ENCODE measurements at regions of chr7 and their contacts with region 1.

Region 1: DNA sequence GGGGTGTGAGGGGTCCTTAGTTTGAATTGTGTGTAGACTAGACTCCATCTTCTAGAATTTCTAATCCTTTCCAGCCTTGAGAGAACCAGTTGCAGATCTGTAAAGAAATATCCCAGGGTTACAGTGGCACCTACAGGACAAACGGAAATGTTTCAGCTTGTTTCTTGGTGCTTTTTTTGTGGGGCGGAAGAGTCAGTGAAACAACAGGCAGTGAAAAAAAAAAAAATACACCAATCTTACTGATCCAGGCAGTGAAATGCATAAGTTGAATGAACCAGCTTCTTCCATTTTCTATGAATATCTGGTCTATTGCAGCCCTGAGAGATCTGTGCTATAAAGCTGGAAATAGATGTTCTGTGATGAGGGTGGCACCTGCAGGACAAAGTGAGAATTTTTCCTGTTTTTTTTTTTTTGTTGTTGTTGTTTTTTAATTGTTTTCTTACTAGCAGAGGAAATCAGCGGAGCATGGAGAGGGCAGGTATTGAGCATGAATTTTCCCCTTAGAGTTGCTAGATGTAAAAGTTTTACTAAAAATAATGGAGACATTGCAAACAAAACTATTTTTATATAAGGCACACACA is 81.9 kb upstream of the DYNC1I1 start:
- DNase-seq: no peak
- H3K4me3 ChIP-seq: peak overlapping the region in 1 of 4 experiments; percentile 41; a peak in 1 of 8 replicates
- H3K27ac ChIP-seq: no peak overlapping the region
- H3K4me1 ChIP-seq: no peaks in the 10 kb centered on the region
- H3K27me3 ChIP-seq: no peaks in the 10 kb centered on the region
- CTCF ChIP-seq: peak in 2 of 3 experiments; percentile 42 to 53; a peak in 3 of 4 replicates
- EP300 ChIP-seq: no peak
- POLR2A ChIP-seq: no peak
- RAD21 ChIP-seq: peak; percentile 48

Region 2: DNA sequence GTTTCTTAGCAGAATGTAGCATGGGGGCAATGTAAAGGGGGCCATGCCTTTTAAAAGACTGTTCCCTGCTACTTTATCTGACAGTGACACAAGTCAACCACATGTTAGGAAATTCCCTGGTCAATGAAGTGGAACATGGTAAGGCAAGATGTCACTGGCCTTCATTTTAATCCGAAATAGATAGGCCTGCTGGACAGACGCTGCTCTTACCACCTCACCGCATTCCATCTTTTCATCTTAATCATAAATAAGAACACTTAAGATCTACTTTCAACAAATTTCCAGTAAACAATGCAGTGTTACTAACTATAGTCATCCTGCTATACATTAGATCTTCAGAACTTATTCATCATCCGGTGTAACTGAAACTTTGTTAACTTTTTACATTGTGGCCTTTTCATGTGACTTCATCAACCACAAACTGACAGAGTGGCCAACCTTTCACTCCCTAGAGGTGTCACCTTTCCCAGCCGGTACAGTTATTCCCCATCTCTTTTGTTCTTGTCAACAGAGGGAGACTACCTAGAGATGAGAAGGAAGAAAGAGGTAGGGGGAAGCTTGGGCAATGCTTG is 189.1 kb before region 1 on chr7:
- CTCF ChIA-PET with region 1: interaction called, 11 read pairs
- POLR2A ChIA-PET with region 1: no interaction called
- DNase-seq: no peak
- H3K4me3 ChIP-seq: no peak overlapping the region
- H3K27ac ChIP-seq: no peak overlapping the region
- H3K4me1 ChIP-seq: peaks cover 0 to 15% (median 11%) of the 10 kb centered on the region in 4 experiments; a peak in 3 of 7 replicates
- H3K27me3 ChIP-seq: peaks cover 0 to 1% (median 0%) of the 10 kb centered on the region in 4 experiments; a peak in 1 of 7 replicates
- CTCF ChIP-seq: no peak
- EP300 ChIP-seq: no peak
- POLR2A ChIP-seq: no peak
- RAD21 ChIP-seq: no peak

Region 3: DNA sequence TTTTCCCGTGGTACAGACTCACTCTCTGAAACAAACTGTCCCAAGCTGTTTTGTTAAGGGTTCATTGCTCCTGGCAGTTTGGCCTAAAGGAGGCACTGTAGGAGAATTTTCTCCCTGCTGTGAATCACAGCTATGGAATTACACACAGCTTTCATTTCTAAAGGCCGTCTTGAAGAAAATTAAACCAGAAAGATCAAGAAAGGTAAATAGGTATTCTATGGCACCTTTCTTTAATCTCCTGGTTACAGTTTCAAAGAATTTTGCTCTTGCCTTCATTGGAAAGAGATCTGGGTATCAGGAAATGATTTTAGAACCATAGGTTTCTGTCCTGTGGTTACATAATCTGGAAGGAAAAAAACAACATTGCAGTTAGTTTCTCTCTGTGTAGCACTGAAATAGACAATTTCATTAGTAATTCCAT is 145.4 kb before region 1 on chr7:
- CTCF ChIA-PET with region 1: interaction called, 187 read pairs
- POLR2A ChIA-PET with region 1: no interaction called
- DNase-seq: no peak
- H3K4me3 ChIP-seq: no peak overlapping the region
- H3K27ac ChIP-seq: no peak overlapping the region
- H3K4me1 ChIP-seq: no peaks in the 10 kb centered on the region
- H3K27me3 ChIP-seq: no peaks in the 10 kb centered on the region
- CTCF ChIP-seq: peak in 2 of 3 experiments; percentile 51 to 63; a peak in 3 of 4 replicates
- EP300 ChIP-seq: no peak
- POLR2A ChIP-seq: no peak
- RAD21 ChIP-seq: peak; percentile 51 to 57; a peak in 3 of 4 replicates

Region 4: DNA sequence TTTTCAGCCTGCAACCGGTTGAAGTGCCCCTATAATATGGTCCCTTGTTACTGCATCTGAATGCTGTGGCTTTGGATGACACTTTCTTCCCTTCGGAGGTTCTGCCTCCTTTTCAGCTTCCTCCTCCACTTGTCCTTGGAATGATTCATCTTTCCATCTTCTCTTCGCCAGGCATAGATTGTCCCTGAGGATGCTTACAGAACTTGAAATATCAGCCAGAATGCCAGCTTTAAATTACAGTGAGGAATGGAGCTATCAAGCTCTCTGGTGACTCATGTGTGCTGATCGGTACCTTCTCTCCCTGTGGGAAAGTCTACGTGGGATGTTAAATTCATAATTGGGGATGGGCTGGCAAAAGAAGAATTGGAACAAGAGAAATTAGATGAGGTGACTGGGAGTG is 48.3 kb before region 1 on chr7:
- CTCF ChIA-PET with region 1: interaction called, 13 read pairs
- POLR2A ChIA-PET with region 1: no interaction called
- DNase-seq: no peak
- H3K4me3 ChIP-seq: no peak overlapping the region
- H3K27ac ChIP-seq: no peak overlapping the region
- H3K4me1 ChIP-seq: no peaks in the 10 kb centered on the region
- H3K27me3 ChIP-seq: peaks cover 0 to 1% (median 0%) of the 10 kb centered on the region in 4 experiments; a peak in 1 of 7 replicates
- CTCF ChIP-seq: no peak
- EP300 ChIP-seq: no peak
- POLR2A ChIP-seq: no peak
- RAD21 ChIP-seq: no peak

Region 5: GRCh38 chr7:95865716-95866371 is 175.4 kb after region 1 on chr7:
- CTCF ChIA-PET with region 1: interaction called, 14 read pairs
- POLR2A ChIA-PET with region 1: no interaction called
- DNase-seq: no peak
- H3K4me3 ChIP-seq: no peak overlapping the region
- H3K27ac ChIP-seq: no peak overlapping the region
- H3K4me1 ChIP-seq: peaks cover 0 to 3% (median 1%) of the 10 kb centered on the region in 4 experiments; a peak in 1 of 7 replicates
- H3K27me3 ChIP-seq: no peaks in the 10 kb centered on the region
- CTCF ChIP-seq: peak in 2 of 3 experiments; percentile 58 to 65; a peak in 2 of 4 replicates
- EP300 ChIP-seq: no peak
- POLR2A ChIP-seq: no peak
- RAD21 ChIP-seq: peak; percentile 78 to 79

Measured in H1 (cell line).